SK-MEL-5 (cell line): ENCODE measurements at regions of chr5 and their contacts with region 1.

Region 1: DNA sequence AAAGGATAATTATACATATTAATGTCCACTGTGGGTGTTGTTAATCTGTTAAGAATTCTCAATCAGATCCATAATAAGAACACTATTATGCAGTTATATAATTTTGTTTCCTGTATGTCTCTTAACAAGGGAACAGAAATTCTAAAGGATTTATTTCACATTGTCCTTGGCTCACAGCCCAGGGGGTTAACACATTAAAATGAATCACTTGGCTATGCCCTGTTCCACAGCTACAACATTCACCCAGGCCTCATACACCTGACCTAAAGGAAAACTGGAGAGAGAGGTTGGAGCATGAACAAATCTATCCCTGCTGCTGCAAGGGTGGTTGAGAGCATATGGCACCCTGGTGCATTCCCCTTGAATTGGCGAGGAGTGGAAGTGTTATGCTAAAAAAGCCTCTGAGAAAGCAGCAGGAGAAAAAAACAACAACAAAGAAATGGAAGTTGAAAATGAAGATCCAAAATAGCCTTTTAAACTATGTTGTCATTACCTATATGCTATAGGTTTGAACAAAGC is 116.0 kb downstream of the KCNN2 start:
- DNase-seq: no peak

Region 2: DNA sequence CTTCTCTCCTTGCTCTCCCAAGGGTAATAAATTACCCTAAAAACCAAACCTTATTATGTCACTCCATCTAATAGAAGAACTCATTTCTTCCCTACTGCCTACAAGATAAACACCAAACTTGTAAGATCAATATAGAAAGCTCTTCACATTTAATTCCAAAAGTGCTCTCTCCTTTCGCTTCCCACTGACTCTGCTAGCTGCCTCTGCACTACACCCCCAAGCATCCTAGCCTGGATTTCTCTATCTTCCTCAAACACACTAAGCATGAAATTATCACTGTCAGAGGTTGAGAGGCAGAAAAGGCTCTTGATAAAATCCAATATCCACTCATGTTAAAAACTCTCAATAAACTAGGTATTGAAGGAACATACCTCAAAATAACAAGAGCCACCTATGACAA is 46.3 kb after region 1 on chr5:
- in situ Hi-C with region 1: no loop called
- DNase-seq: no peak

Region 3: DNA sequence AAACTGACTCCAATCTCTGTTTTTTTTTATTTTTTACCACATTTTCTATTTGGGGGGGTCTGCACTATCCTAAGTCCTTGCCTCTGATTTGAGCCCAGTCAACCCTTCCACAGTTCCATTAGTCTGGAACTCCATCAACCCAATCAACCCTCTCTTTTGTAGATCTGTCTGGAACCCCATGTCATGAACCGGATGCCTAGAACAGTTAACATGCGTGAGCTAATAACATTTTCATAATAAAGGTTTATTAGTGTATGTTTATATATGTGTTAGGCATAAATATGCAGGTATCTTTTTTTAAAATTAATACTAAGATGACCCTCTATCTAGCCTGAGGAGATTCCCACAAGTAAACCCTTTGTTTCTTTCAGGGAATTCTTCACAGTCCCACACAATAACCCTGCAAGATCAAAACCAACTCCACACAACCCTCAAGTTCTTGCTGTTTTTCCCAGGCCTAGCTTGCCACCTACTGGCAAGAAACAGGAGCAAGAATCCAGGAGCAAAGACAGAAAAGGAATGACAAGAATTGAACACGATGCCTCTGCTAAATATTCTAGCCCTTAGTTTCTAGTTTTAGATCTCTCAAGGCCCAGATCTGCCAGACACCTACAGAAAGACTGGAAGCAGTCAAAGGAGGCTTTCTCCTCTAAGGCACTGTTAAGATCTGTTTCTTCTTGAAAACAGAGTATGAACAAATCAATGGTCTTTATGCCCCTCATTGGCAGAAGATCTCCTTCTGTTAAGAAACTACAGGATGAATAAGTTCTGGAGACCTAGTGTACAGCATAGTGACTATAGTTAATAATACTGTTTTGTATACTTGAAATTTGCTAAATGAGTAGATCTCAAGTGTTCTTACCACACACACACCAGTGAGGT is 591.5 kb after region 1 on chr5:
- in situ Hi-C with region 1: loop called (anchors 25 kb)
- DNase-seq: peak; percentile 83